Panc1 (cell line): ENCODE measurements at regions of chr18 and their contacts with region 1.

Region 1: DNA sequence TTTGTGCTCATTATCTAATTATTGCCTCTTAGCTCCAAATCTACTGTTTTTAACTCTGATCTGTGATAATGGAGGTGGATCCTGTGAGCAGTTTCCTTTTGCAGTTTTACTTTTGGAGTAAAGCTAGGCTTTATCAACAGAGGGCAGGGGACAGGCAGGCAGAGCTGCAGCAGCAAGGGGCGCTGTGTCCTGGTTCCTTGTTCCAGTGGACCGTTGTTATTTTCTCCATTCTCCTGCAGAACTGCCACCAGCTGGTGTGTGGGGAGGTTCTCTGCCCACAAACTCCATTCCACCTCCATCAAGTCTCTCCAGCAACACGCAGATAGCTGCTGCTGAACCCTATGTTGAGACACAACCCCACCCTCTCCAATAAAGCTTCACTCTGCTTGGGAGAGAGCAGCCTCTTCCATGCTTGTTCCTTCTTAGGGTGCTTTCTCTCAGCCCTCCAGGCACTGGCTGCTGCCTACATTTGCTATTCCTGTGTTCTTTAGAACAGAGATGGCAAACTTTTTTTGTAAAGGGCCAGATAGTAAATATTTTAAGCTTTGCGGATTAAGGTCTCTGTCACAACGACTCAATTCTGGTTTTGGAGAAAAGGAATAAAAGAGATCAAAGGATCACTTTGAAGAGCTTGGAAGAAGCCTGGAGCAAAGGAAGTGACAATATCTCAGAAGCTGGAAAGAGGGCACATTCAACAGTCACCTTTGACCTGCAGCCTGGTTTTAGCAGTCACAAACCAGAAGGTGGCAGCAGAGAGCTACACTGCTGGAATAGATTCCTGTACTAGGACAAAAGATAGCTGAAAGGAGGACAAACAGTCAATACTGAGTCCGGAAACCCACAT is 208.8 kb downstream of the CCDC178 start:
- DNase-seq: peak; percentile 68
- ATAC-seq: peak; percentile 84
- H3K4me3 ChIP-seq: no peak overlapping the region
- H3K27ac ChIP-seq: no peak overlapping the region
- H3K4me1 ChIP-seq: no peaks in the 10 kb centered on the region
- H3K27me3 ChIP-seq: no peaks in the 10 kb centered on the region
- CTCF ChIP-seq: peak; percentile 91

Region 2: GRCh38 chr18:32974421-32975162 is 257.1 kb before region 1 on chr18:
- CTCF ChIA-PET with region 1: no interaction called
- POLR2A ChIA-PET with region 1: no interaction called
- in situ Hi-C with region 1: no loop called
- intact Hi-C with region 1: no loop called
- DNase-seq: no peak
- ATAC-seq: no peak
- H3K4me3 ChIP-seq: no peak overlapping the region
- H3K27ac ChIP-seq: no peak overlapping the region
- H3K4me1 ChIP-seq: no peaks in the 10 kb centered on the region
- H3K27me3 ChIP-seq: no peaks in the 10 kb centered on the region
- CTCF ChIP-seq: no peak

Region 3: GRCh38 chr18:33304277-33304676 is 72.6 kb after region 1 on chr18:
- CTCF ChIA-PET with region 1: no interaction called
- POLR2A ChIA-PET with region 1: no interaction called
- in situ Hi-C with region 1: no loop called
- intact Hi-C with region 1: no loop called
- DNase-seq: no peak
- ATAC-seq: no peak
- H3K4me3 ChIP-seq: no peak overlapping the region
- H3K27ac ChIP-seq: no peak overlapping the region
- H3K4me1 ChIP-seq: no peaks in the 10 kb centered on the region
- H3K27me3 ChIP-seq: no peaks in the 10 kb centered on the region
- CTCF ChIP-seq: no peak

Region 4: GRCh38 chr18:33495278-33495677 is 263.6 kb after region 1 on chr18:
- CTCF ChIA-PET with region 1: interaction called, 4 read pairs
- POLR2A ChIA-PET with region 1: no interaction called
- in situ Hi-C with region 1: no loop called
- intact Hi-C with region 1: loop called (anchors 1 kb)
- DNase-seq: peak; percentile 17
- ATAC-seq: peak; percentile 73; the same call in 1 of the 2 replicates
- H3K4me3 ChIP-seq: no peak overlapping the region
- H3K27ac ChIP-seq: no peak overlapping the region
- H3K4me1 ChIP-seq: no peaks in the 10 kb centered on the region
- H3K27me3 ChIP-seq: no peaks in the 10 kb centered on the region
- CTCF ChIP-seq: peak; percentile 75

Region 5: DNA sequence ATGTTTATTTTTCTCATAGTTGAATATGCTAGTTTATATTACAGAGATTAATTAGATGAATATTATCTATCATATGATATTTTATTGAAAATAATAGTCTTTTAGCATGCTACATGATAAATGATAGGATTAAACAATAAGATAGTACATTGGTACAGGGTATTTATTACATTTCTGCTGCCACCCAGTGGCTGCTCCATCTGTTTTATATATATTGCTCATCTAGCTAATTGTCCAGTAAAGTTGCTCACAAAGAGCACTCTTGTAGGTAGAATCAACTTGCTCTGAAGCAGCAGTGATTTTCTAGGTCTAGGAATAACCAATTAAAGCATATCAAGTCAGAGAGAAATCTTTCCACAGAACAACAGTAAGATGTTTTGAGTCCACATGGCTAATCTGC is 529.7 kb after region 1 on chr18:
- CTCF ChIA-PET with region 1: interaction called, 6 read pairs
- POLR2A ChIA-PET with region 1: no interaction called
- in situ Hi-C with region 1: no loop called
- intact Hi-C with region 1: loop called (anchors 5 kb)
- DNase-seq: no peak
- ATAC-seq: peak; percentile 82; the same call in 1 of the 2 replicates
- H3K4me3 ChIP-seq: no peak overlapping the region
- H3K27ac ChIP-seq: no peak overlapping the region
- H3K4me1 ChIP-seq: no peaks in the 10 kb centered on the region
- H3K27me3 ChIP-seq: no peaks in the 10 kb centered on the region
- CTCF ChIP-seq: peak; percentile 61; the same call in 1 of the 2 replicates